ENCODE measurements at regions of chr12 and their contacts with region 1.

Region 1: GRCh38 chr12:949453-950191 is at the start of gene RAD52:
- DNase-seq: peak; percentile 95 to 99 (median 97)
- ATAC-seq: peak; percentile 87
- H3K4me3 ChIP-seq: peak within 1 kb of the TSS; percentile 75
- H3K4me3 Mint-ChIP-seq: peak within 1 kb of the TSS; percentile 98
- H3K27ac ChIP-seq: peak within 1 kb of the TSS; percentile 80 to 86
- H3K27ac Mint-ChIP-seq: peak within 1 kb of the TSS; percentile 90
- H3K4me1 ChIP-seq: peaks cover 24% of the 10 kb centered on the region
- H3K4me1 Mint-ChIP-seq: peaks cover 34% of the 10 kb centered on the region
- H3K27me3 ChIP-seq: no peaks in the 10 kb centered on the region
- H3K27me3 Mint-ChIP-seq: no peaks in the 10 kb centered on the region
- CTCF ChIP-seq: peak; percentile 96
- total RNA-seq, gene RAD52: 7.0 to 8.1 TPM

Region 2: DNA sequence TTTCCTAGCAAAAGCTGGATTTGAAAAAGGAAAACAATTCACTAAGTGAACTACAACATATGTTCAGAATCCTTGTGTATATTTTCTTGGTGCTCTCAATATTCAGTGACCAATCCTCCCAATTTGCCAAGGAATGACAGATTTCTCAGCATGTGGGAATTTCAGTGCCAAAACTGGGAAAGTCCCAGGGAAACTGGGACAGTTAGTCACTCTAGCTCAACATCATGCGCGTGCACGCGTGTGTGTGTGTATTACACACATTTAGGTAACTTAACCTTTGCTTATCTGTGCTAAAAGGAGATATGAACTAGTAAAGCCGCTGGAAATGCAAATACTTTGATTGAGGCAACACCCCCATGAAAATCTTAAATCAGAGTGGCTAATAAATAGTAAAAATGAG is 660.9 kb before region 1 on chr12:
- CTCF ChIA-PET with region 1: no interaction called
- POLR2A ChIA-PET with region 1: no interaction called
- intact Hi-C with region 1: no loop called
- DNase-seq: no peak
- ATAC-seq: no peak
- H3K4me3 ChIP-seq: no peak overlapping the region
- H3K4me3 Mint-ChIP-seq: no peak overlapping the region
- H3K27ac ChIP-seq: no peak overlapping the region
- H3K27ac Mint-ChIP-seq: no peak overlapping the region
- H3K4me1 ChIP-seq: no peaks in the 10 kb centered on the region
- H3K4me1 Mint-ChIP-seq: peaks cover 42% of the 10 kb centered on the region
- H3K27me3 ChIP-seq: no peaks in the 10 kb centered on the region
- H3K27me3 Mint-ChIP-seq: no peaks in the 10 kb centered on the region
- CTCF ChIP-seq: no peak

Region 3: GRCh38 chr12:389139-390096 is 560.2 kb before region 1 on chr12 and contains the start of gene KDM5A:
- CTCF ChIA-PET with region 1: no interaction called
- POLR2A ChIA-PET with region 1: no interaction called
- intact Hi-C with region 1: loop called in 1 of 2 experiments (anchors 10 kb)
- DNase-seq: peak; percentile 81 to 96 (median 88)
- ATAC-seq: peak; percentile 90
- H3K4me3 ChIP-seq: peak within 1 kb of the TSS; percentile 91
- H3K4me3 Mint-ChIP-seq: peak within 1 kb of the TSS; percentile 99
- H3K27ac ChIP-seq: peak within 1 kb of the TSS; percentile 90 to 93
- H3K27ac Mint-ChIP-seq: peak within 1 kb of the TSS; percentile 93
- H3K4me1 ChIP-seq: peaks cover 10% of the 10 kb centered on the region
- H3K4me1 Mint-ChIP-seq: peaks cover 48% of the 10 kb centered on the region
- H3K27me3 ChIP-seq: no peaks in the 10 kb centered on the region
- H3K27me3 Mint-ChIP-seq: no peaks in the 10 kb centered on the region
- CTCF ChIP-seq: no peak
- total RNA-seq, gene KDM5A: 149 to 151 TPM

Region 4: GRCh38 chr12:569803-570434 is 379.7 kb before region 1 on chr12:
- CTCF ChIA-PET with region 1: interaction called, 7 read pairs
- POLR2A ChIA-PET with region 1: interaction called, 4 read pairs
- intact Hi-C with region 1: loop called (anchors 2 kb)
- DNase-seq: peak; percentile 78 to 93 (median 84)
- ATAC-seq: peak; percentile 98
- H3K4me3 ChIP-seq: peak overlapping the region; percentile 69
- H3K4me3 Mint-ChIP-seq: peak overlapping the region; percentile 87
- H3K27ac ChIP-seq: no peak overlapping the region
- H3K27ac Mint-ChIP-seq: peak overlapping the region; percentile 78
- H3K4me1 ChIP-seq: peaks cover 53% of the 10 kb centered on the region
- H3K4me1 Mint-ChIP-seq: peaks cover 60% of the 10 kb centered on the region
- H3K27me3 ChIP-seq: no peaks in the 10 kb centered on the region
- H3K27me3 Mint-ChIP-seq: no peaks in the 10 kb centered on the region
- CTCF ChIP-seq: peak; percentile 92

Region 5: GRCh38 chr12:810671-811415 is 138.8 kb before region 1 on chr12:
- CTCF ChIA-PET with region 1: no interaction called
- POLR2A ChIA-PET with region 1: no interaction called
- intact Hi-C with region 1: loop called (anchors 1 to 5 kb)
- DNase-seq: no peak
- ATAC-seq: peak; percentile 34
- H3K4me3 ChIP-seq: no peak overlapping the region
- H3K4me3 Mint-ChIP-seq: peak overlapping the region; percentile 64
- H3K27ac ChIP-seq: peak overlapping the region in 1 of 2 donors; percentile 26
- H3K27ac Mint-ChIP-seq: peak overlapping the region; percentile 78
- H3K4me1 ChIP-seq: peaks cover 39% of the 10 kb centered on the region
- H3K4me1 Mint-ChIP-seq: peaks cover 83% of the 10 kb centered on the region
- H3K27me3 ChIP-seq: no peaks in the 10 kb centered on the region
- H3K27me3 Mint-ChIP-seq: no peaks in the 10 kb centered on the region
- CTCF ChIP-seq: no peak

Region 6: DNA sequence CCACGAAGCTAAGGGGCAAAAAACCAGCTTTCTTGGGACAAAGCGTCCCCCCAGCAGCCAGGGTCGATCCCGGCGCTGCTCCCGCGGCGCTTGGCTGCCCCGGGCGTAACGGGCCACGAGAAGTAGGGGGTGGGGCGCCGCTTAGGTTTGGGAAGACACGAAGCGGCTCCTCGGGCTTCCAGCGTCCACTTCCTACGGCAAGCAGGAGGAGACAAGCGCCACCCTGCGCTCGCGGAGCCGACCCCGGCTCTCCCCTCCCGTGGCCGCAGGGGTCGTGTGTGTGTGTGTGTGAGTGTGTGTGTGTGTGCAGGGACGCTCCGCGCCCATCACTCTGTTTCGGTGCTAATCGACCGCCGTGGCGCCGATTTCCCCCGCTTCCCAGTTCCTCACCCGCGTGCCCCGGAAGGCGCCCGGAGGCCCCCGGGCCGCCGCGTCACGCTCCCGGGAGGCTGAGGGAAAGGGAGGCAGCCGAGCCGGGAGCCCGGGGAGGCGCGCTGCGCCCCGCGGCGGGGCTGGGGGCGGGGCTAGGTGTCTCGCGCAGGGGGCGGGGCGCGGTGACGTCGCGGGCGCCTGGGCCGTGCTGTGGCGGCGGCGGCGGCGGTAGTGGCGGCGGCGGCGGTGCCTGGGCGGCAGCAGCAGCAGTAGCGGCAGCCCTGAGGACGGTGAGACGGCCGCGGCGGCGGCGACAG is 41.2 kb after region 1 on chr12 and contains the start of gene ERC1:
- CTCF ChIA-PET with region 1: interaction called, 13 read pairs
- POLR2A ChIA-PET with region 1: interaction called, 20 read pairs
- intact Hi-C with region 1: loop called (anchors 1 kb)
- DNase-seq: peak; percentile 68 to 94 (median 84)
- ATAC-seq: peak; percentile 81
- H3K4me3 ChIP-seq: peak within 1 kb of the TSS; percentile 89
- H3K4me3 Mint-ChIP-seq: peak within 1 kb of the TSS; percentile 99
- H3K27ac ChIP-seq: peak within 1 kb of the TSS; percentile 69 to 74
- H3K27ac Mint-ChIP-seq: peak within 1 kb of the TSS; percentile 96
- H3K4me1 ChIP-seq: peaks cover 23% of the 10 kb centered on the region
- H3K4me1 Mint-ChIP-seq: peaks cover 47% of the 10 kb centered on the region
- H3K27me3 ChIP-seq: no peaks in the 10 kb centered on the region
- H3K27me3 Mint-ChIP-seq: no peaks in the 10 kb centered on the region
- CTCF ChIP-seq: no peak
- total RNA-seq, gene ERC1: 40.1 to 49.6 TPM

Region 7: GRCh38 chr12:1594261-1595025 is 644.8 kb after region 1 on chr12 and contains the start of gene FBXL14:
- CTCF ChIA-PET with region 1: interaction called, 3 read pairs
- POLR2A ChIA-PET with region 1: interaction called, 4 read pairs
- intact Hi-C with region 1: loop called (anchors 5 kb)
- DNase-seq: peak; percentile 84 to 96 (median 90)
- ATAC-seq: peak; percentile 56
- H3K4me3 ChIP-seq: peak within 1 kb of the TSS; percentile 79
- H3K4me3 Mint-ChIP-seq: peak within 1 kb of the TSS; percentile 95
- H3K27ac ChIP-seq: peak within 1 kb of the TSS; percentile 73 to 88
- H3K27ac Mint-ChIP-seq: peak within 1 kb of the TSS; percentile 91
- H3K4me1 ChIP-seq: peaks cover 37% of the 10 kb centered on the region
- H3K4me1 Mint-ChIP-seq: peaks cover 55% of the 10 kb centered on the region
- H3K27me3 ChIP-seq: no peaks in the 10 kb centered on the region
- H3K27me3 Mint-ChIP-seq: no peaks in the 10 kb centered on the region
- CTCF ChIP-seq: no peak
- total RNA-seq, gene FBXL14: 32.3 to 33.6 TPM

Region 8: DNA sequence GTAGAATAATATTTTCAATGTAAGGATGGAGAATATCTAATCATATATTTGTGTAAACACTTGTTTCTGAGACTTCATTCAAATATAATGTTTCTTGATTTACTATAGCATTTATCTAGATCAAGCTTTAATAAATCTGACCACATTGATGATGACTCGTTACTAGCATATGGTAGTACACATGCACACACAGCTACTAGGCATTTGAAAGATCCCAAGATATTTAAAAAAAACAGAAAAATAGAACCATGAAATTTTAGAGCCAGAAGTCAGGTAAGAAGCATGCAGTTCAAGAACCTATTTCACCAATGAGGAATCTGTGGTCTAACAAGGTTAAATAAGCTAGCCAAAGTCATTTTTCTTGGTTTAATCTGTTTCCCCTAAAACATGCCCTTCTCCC is 1022.6 kb after region 1 on chr12:
- CTCF ChIA-PET with region 1: no interaction called
- POLR2A ChIA-PET with region 1: no interaction called
- intact Hi-C with region 1: no loop called
- DNase-seq: no peak
- ATAC-seq: no peak
- H3K4me3 ChIP-seq: no peak overlapping the region
- H3K4me3 Mint-ChIP-seq: no peak overlapping the region
- H3K27ac ChIP-seq: no peak overlapping the region
- H3K27ac Mint-ChIP-seq: no peak overlapping the region
- H3K4me1 ChIP-seq: no peaks in the 10 kb centered on the region
- H3K4me1 Mint-ChIP-seq: peaks cover 7% of the 10 kb centered on the region
- H3K27me3 ChIP-seq: no peaks in the 10 kb centered on the region
- H3K27me3 Mint-ChIP-seq: no peaks in the 10 kb centered on the region
- CTCF ChIP-seq: no peak